Panc1 (cell line): ENCODE measurements at regions of chr1 and their contacts with region 1.

Region 1: GRCh38 chr1:146021622-146022402 is at the start of gene HJV:
- DNase-seq: no peak
- ATAC-seq: no peak
- H3K4me3 ChIP-seq: no peak within 1 kb of the TSS
- H3K27ac ChIP-seq: no peak within 1 kb of the TSS
- H3K4me1 ChIP-seq: no peaks in the 10 kb centered on the region
- H3K27me3 ChIP-seq: peaks cover 8% of the 10 kb centered on the region; the same call in 1 of the 2 replicates
- CTCF ChIP-seq: no peak
- total RNA-seq, gene HJV: not detected

Region 2: DNA sequence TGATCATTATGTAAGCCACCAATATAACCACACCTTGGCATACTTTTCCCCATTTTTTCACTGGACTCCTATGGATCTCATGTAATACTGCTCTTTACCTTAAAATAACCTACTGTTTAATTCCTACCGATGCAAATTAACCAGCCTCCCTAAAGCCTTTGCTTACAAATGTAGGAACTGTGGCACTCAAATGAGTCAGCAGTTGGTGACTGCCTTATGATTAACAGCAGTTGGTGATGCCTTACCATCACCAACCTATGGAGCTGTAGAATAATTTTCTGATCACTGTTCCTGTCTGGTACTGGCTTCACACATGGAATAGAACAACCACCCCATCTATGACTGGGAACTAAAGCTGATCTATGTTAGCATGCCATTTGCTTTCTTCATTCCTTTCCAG is 184.2 kb before region 1 on chr1:
- CTCF ChIA-PET with region 1: no interaction called
- POLR2A ChIA-PET with region 1: interaction called, 14 read pairs
- in situ Hi-C with region 1: no loop called
- intact Hi-C with region 1: no loop called
- DNase-seq: no peak
- ATAC-seq: no peak
- H3K4me3 ChIP-seq: no peak overlapping the region
- H3K27ac ChIP-seq: no peak overlapping the region
- H3K4me1 ChIP-seq: no peaks in the 10 kb centered on the region
- H3K27me3 ChIP-seq: no peaks in the 10 kb centered on the region
- CTCF ChIP-seq: no peak